Activated T-helper 2 cell treated with anti-CD3 and anti-CD28 coated beads, Interferon-gamma antibody, Interleukin-2, Interleukin-4, amounts not matched to agents 10 μg/mL and 5 μg/mL and 100 μg/mL, durations not matched to agents 14 hours and 24 hours and 36 hours (primary cell): ENCODE measurements at regions of chr2 and their contacts with region 1.

Region 1: GRCh38 chr2:134118279-134119116 is 135.4 kb upstream of the MGAT5 start:
- DNase-seq: peak; percentile 62
- H3K4me3 Mint-ChIP-seq: peak overlapping the region; percentile 47
- H3K27ac Mint-ChIP-seq: no peak overlapping the region
- H3K4me1 Mint-ChIP-seq: peaks cover 19% of the 10 kb centered on the region
- H3K27me3 Mint-ChIP-seq: peaks cover 42% of the 10 kb centered on the region

Region 2: GRCh38 chr2:134207564-134208209 is 89.2 kb after region 1 on chr2:
- intact Hi-C with region 1: loop called (anchors 5 kb)
- DNase-seq: no peak
- H3K4me3 Mint-ChIP-seq: no peak overlapping the region
- H3K27ac Mint-ChIP-seq: no peak overlapping the region
- H3K4me1 Mint-ChIP-seq: peaks cover 11% of the 10 kb centered on the region
- H3K27me3 Mint-ChIP-seq: no peaks in the 10 kb centered on the region

Region 3: GRCh38 chr2:134253804-134254203 is 135.3 kb after region 1 on chr2 and contains the start of gene MGAT5:
- intact Hi-C with region 1: loop called (anchors 1 kb)
- DNase-seq: no peak
- H3K4me3 Mint-ChIP-seq: no peak within 1 kb of the TSS
- H3K27ac Mint-ChIP-seq: no peak within 1 kb of the TSS
- H3K4me1 Mint-ChIP-seq: peaks cover 63% of the 10 kb centered on the region
- H3K27me3 Mint-ChIP-seq: peaks cover 42% of the 10 kb centered on the region
- total RNA-seq, gene MGAT5: 14.0 and 14.1 TPM in 2 replicates

Region 4: GRCh38 chr2:134451347-134451630 is 332.8 kb after region 1 on chr2:
- intact Hi-C with region 1: loop called (anchors 1 kb)
- DNase-seq: no peak
- H3K4me3 Mint-ChIP-seq: no peak overlapping the region
- H3K27ac Mint-ChIP-seq: no peak overlapping the region
- H3K4me1 Mint-ChIP-seq: no peaks in the 10 kb centered on the region
- H3K27me3 Mint-ChIP-seq: no peaks in the 10 kb centered on the region

Region 5: GRCh38 chr2:134782792-134783191 is 664.3 kb after region 1 on chr2:
- intact Hi-C with region 1: loop called (anchors 10 kb)
- DNase-seq: no peak
- H3K4me3 Mint-ChIP-seq: no peak overlapping the region
- H3K27ac Mint-ChIP-seq: no peak overlapping the region
- H3K4me1 Mint-ChIP-seq: peaks cover 5% of the 10 kb centered on the region
- H3K27me3 Mint-ChIP-seq: peaks cover 14% of the 10 kb centered on the region

Region 6: GRCh38 chr2:135052042-135052876 is 933.8 kb after region 1 on chr2 and contains the start of gene RAB3GAP1:
- intact Hi-C with region 1: loop called (anchors 2 kb)
- DNase-seq: peak; percentile 91
- H3K4me3 Mint-ChIP-seq: peak within 1 kb of the TSS; percentile 96
- H3K27ac Mint-ChIP-seq: peak within 1 kb of the TSS; percentile 100
- H3K4me1 Mint-ChIP-seq: peaks cover 47% of the 10 kb centered on the region
- H3K27me3 Mint-ChIP-seq: no peaks in the 10 kb centered on the region
- total RNA-seq, gene RAB3GAP1: 26.6 and 30.8 TPM in 2 replicates